CD14-positive monocyte (primary cell): ENCODE measurements at regions of chr7 and their contacts with region 1.

Region 1: DNA sequence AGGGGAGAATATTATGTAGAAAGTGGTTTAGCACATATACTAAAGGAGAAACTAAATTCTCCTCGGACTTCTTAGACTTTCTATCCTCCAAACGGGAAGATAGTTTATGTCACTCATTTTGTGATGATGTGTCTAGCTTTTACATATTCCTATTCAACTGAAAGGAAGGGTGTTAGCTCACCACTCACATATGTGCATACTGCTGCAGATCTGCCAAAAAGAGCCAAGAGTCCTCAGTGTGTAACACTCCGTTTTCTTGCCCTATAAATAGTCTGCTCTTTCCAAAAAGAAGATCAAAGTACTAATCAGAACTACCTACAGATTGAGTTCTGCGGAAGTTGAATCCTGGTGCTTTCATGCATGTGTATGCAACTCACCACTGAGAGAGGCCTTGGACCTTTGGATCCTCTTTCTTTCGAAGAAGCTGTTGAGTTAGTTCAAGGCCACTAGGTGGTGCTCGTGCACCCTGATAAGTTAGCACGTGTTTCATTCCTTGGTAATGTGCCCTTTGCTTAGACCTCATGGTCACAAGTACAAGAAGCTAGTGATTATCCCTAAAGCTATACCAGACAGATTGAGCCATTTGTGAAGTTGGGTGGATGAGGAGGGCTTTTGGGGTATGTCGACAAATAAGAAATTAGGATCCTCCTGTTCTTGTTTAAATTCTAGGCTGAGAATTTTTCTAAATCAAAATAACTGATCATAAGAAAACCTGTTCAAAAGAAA is 14.1 kb downstream of the YAE1 start:
- DNase-seq: peak; percentile 80 to 87 (median 84)
- H3K4me3 ChIP-seq: no peak overlapping the region
- H3K4me3 Mint-ChIP-seq: no peak overlapping the region
- H3K27ac ChIP-seq: no peak overlapping the region
- H3K27ac Mint-ChIP-seq: no peak overlapping the region
- H3K4me1 ChIP-seq: no peaks in the 10 kb centered on the region
- H3K4me1 Mint-ChIP-seq: no peaks in the 10 kb centered on the region
- H3K27me3 ChIP-seq: no peaks in the 10 kb centered on the region
- H3K27me3 Mint-ChIP-seq: peaks cover 0 to 3% (median 0%) of the 10 kb centered on the region in 3 donors
- CTCF ChIP-seq: peak; percentile 79

Region 2: GRCh38 chr7:39623018-39623731 is 42.9 kb after region 1 on chr7 and contains the start of gene RALA:
- intact Hi-C with region 1: loop called in 1 of 2 experiments (anchors 5 kb)
- DNase-seq: peak; percentile 80 to 87 (median 84)
- H3K4me3 ChIP-seq: peak within 1 kb of the TSS; percentile 65 to 84 (median 71)
- H3K4me3 Mint-ChIP-seq: peak within 1 kb of the TSS; percentile 89 to 92
- H3K27ac ChIP-seq: peak within 1 kb of the TSS; percentile 78 to 94
- H3K27ac Mint-ChIP-seq: peak within 1 kb of the TSS; percentile 79 to 97 (median 93)
- H3K4me1 ChIP-seq: peaks cover 34% of the 10 kb centered on the region in 2 donors
- H3K4me1 Mint-ChIP-seq: peaks cover 42% of the 10 kb centered on the region
- H3K27me3 ChIP-seq: no peaks in the 10 kb centered on the region
- H3K27me3 Mint-ChIP-seq: peaks cover 0 to 3% (median 2%) of the 10 kb centered on the region in 3 donors
- CTCF ChIP-seq: no peak
- polyA plus RNA-seq, gene RALA: 5.9 to 32.0 (median 30.8) TPM

Region 3: GRCh38 chr7:39633563-39634477 is 53.5 kb after region 1 on chr7:
- intact Hi-C with region 1: loop called in 1 of 2 experiments (anchors 10 kb)
- DNase-seq: no peak
- H3K4me3 ChIP-seq: no peak overlapping the region
- H3K4me3 Mint-ChIP-seq: no peak overlapping the region
- H3K27ac ChIP-seq: peak overlapping the region in 1 of 2 donors; percentile 16
- H3K27ac Mint-ChIP-seq: peak overlapping the region in 2 of 7 donors; percentile 6 to 12
- H3K4me1 ChIP-seq: no peaks in the 10 kb centered on the region
- H3K4me1 Mint-ChIP-seq: peaks cover 8% of the 10 kb centered on the region
- H3K27me3 ChIP-seq: no peaks in the 10 kb centered on the region
- H3K27me3 Mint-ChIP-seq: peaks cover 0 to 1% (median 0%) of the 10 kb centered on the region in 3 donors
- CTCF ChIP-seq: no peak

Region 4: GRCh38 chr7:39746103-39746819 is 165.9 kb after region 1 on chr7:
- intact Hi-C with region 1: loop called (anchors 2 kb)
- DNase-seq: peak; percentile 21 to 53 (median 52)
- H3K4me3 ChIP-seq: no peak overlapping the region
- H3K4me3 Mint-ChIP-seq: no peak overlapping the region
- H3K27ac ChIP-seq: no peak overlapping the region
- H3K27ac Mint-ChIP-seq: peak overlapping the region in 2 of 7 donors; percentile 25 to 35
- H3K4me1 ChIP-seq: no peaks in the 10 kb centered on the region
- H3K4me1 Mint-ChIP-seq: peaks cover 8% of the 10 kb centered on the region
- H3K27me3 ChIP-seq: no peaks in the 10 kb centered on the region
- H3K27me3 Mint-ChIP-seq: peaks cover 0 to 2% (median under 1%) of the 10 kb centered on the region in 3 donors
- CTCF ChIP-seq: peak; percentile 62